GM12878 (cell line): ENCODE measurements at regions of chr11 and their contacts with region 1.

Region 1: DNA sequence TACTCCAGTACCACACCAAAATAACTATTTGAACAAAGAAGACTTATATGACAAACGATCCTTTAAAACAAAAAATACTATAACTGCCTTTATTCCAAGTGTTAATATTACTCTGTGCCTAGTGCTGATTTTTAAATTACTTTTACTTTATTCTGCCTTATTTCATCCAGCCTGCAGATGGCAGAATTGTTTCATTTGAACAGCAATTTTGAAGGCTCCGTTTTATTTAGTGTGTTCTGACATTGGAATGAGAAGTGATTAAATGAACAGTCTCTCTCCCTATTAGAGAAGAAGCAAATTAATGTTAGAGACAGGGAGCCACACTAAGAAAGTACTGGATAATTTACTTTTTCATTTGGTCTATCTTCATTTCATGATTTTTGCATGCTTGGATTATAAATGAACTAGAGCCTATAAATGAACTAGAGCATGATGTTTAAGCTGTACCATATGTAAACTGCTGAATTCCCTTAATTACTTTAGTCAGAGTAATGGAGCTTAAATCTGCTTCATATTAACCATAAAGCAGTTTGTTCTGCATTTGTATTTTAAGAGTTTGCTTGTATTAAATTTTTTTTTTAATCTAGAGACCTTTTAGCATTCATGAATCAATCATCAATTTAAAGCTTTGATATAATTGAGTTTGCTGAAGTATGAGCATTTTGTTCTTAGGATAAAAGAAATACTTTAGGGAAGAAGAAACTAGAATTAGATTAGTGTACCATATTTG is 9.8 kb downstream of the PDHX start:
- DNase-seq: no peak
- ATAC-seq: peak; percentile 76
- H3K4me3 ChIP-seq: no peak overlapping the region
- H3K27ac ChIP-seq: no peak overlapping the region
- H3K4me1 ChIP-seq: 0 out of 2 replicates have a peak, but pooled peaks cover 2% of the 10 kb centered on the region
- H3K27me3 ChIP-seq: no peaks in the 10 kb centered on the region
- CTCF ChIP-seq: peak; percentile 52 to 70 (median 59); a peak in 5 of 6 replicates
- EP300 ChIP-seq: no peak
- POLR2A ChIP-seq: no peak
- RAD21 ChIP-seq: peak; percentile 97

Region 2: GRCh38 chr11:34585735-34586487 is 340.4 kb before region 1 on chr11:
- CTCF ChIA-PET with region 1: interaction called, 3 read pairs
- POLR2A ChIA-PET with region 1: no interaction called
- RAD21 ChIA-PET with region 1: interaction called, 4 read pairs
- SMC1A ChIA-PET with region 1: interaction called, 10 read pairs
- in situ Hi-C with region 1: no loop called
- intact Hi-C with region 1: no loop called
- DNase-seq: peak; percentile 20
- ATAC-seq: peak; percentile 91
- H3K4me3 ChIP-seq: no peak overlapping the region
- H3K27ac ChIP-seq: no peak overlapping the region
- H3K4me1 ChIP-seq: no peaks in the 10 kb centered on the region
- H3K27me3 ChIP-seq: no peaks in the 10 kb centered on the region; a peak in 2 of 4 replicates
- CTCF ChIP-seq: peak; percentile 54 to 64 (median 59); a peak in 5 of 6 replicates
- EP300 ChIP-seq: no peak
- POLR2A ChIP-seq: no peak
- RAD21 ChIP-seq: peak; percentile 91

Region 3: DNA sequence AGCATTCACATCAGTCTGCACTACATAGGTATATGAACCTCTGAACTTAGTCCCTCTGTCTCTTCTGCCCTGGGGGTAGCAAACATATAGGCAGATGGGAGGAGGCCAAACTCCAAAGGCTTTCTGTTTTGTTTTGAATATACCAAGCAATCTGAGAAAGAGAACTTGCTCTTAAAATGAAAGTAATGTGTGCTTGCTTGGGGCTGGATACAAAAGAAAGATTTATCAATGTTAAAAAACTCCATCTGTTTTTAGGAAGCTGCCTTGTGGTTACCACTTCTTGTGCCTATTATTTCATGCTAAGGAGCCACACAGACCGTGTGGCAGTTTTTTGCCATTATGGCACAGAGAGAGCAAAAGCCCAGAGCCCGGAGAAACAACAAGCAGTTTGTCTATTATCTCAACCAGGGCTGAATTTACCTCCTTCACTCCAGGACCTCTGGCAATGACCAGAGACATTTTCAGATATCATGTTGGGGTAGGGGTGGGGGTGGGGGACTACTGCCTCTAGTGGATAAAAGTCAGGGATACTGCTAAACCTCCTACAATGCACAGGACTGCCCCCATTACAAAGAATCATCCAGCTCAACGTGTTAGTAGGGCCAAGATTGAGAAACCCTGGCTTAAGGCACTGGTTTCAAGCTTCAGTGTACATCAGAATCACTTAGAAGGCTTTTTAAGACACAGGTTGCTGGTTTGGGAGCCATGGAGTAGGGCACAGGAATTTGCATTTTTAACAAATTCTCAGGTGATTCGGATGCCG is 134.3 kb before region 1 on chr11:
- CTCF ChIA-PET with region 1: no interaction called
- POLR2A ChIA-PET with region 1: no interaction called
- RAD21 ChIA-PET with region 1: no interaction called
- SMC1A ChIA-PET with region 1: no interaction called
- in situ Hi-C with region 1: no loop called
- intact Hi-C with region 1: no loop called
- DNase-seq: no peak
- ATAC-seq: no peak
- H3K4me3 ChIP-seq: no peak overlapping the region
- H3K27ac ChIP-seq: no peak overlapping the region
- H3K4me1 ChIP-seq: no peaks in the 10 kb centered on the region
- H3K27me3 ChIP-seq: no peaks in the 10 kb centered on the region
- CTCF ChIP-seq: no peak
- EP300 ChIP-seq: no peak
- POLR2A ChIP-seq: no peak
- RAD21 ChIP-seq: no peak

Region 4: DNA sequence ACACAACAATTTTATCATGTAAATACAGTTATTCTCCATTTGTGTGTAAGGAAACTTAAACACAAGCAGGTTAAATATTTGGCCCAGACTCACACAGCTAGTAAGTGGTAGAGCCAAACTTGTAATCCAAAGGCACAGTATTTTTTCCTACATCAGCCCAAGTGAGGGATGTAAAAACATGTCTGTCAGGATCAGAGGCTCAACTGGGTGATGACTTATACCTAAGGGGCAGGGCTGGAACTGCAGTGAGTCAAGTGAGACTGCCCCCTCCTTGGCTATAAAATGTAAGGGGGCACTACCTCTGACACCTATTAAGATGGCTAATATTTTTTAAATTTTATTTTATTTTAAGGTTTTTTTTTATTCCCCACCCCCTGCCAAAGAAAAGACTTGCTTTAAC is 92.7 kb before region 1 on chr11:
- CTCF ChIA-PET with region 1: no interaction called
- POLR2A ChIA-PET with region 1: no interaction called
- RAD21 ChIA-PET with region 1: no interaction called
- SMC1A ChIA-PET with region 1: no interaction called
- in situ Hi-C with region 1: no loop called
- intact Hi-C with region 1: no loop called
- DNase-seq: no peak
- ATAC-seq: no peak
- H3K4me3 ChIP-seq: no peak overlapping the region
- H3K27ac ChIP-seq: no peak overlapping the region
- H3K4me1 ChIP-seq: no peaks in the 10 kb centered on the region
- H3K27me3 ChIP-seq: peaks cover 0 to 1% of the 10 kb centered on the region in 2 experiments; a peak in 2 of 4 replicates
- CTCF ChIP-seq: no peak
- EP300 ChIP-seq: no peak
- POLR2A ChIP-seq: no peak
- RAD21 ChIP-seq: no peak

Region 5: DNA sequence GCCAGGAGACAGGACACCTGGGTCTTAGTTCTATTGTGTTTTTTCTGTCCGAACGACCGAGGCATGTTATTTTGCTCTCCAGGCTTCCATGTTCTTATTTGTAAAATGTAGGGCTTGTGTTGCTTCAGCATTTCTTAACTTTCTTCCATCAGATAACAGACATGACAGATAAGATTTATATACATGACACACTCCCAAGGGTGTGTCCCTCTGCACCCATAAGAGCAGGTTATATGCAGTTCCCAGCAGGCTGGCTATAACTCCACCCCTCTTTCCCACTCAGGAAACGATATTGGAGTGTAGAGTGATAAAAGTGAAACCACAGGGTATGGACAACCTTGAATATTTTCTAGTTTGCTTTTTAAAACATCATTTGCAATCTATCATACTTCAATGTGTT is 75.9 kb before region 1 on chr11:
- CTCF ChIA-PET with region 1: no interaction called
- POLR2A ChIA-PET with region 1: no interaction called
- RAD21 ChIA-PET with region 1: no interaction called
- SMC1A ChIA-PET with region 1: no interaction called
- in situ Hi-C with region 1: no loop called
- intact Hi-C with region 1: no loop called
- DNase-seq: no peak
- ATAC-seq: no peak
- H3K4me3 ChIP-seq: no peak overlapping the region
- H3K27ac ChIP-seq: no peak overlapping the region
- H3K4me1 ChIP-seq: no peaks in the 10 kb centered on the region
- H3K27me3 ChIP-seq: no peaks in the 10 kb centered on the region
- CTCF ChIP-seq: no peak
- EP300 ChIP-seq: no peak
- POLR2A ChIP-seq: no peak
- RAD21 ChIP-seq: no peak

Region 6: DNA sequence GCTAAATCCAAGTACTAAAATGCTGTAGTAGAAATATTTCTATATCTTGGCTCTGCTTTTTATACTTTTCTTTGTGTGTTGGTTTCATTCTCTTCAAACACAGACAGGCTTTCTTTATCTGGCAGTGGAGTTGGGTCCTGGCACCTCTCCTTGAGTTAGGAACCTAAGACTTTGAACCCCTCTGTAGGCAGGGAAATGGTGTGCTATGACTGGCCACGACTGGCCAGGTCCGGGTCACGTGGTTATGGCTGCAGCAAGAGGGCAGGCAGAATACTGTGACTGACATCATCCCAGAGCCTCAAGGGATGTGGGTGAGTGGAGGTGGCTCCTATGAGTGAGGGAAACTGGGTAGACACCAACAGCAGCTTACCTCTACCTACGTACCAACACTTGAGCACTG is 52.1 kb before region 1 on chr11:
- CTCF ChIA-PET with region 1: no interaction called
- POLR2A ChIA-PET with region 1: no interaction called
- RAD21 ChIA-PET with region 1: no interaction called
- SMC1A ChIA-PET with region 1: no interaction called
- in situ Hi-C with region 1: no loop called
- intact Hi-C with region 1: no loop called
- DNase-seq: no peak
- ATAC-seq: no peak
- H3K4me3 ChIP-seq: no peak overlapping the region
- H3K27ac ChIP-seq: no peak overlapping the region
- H3K4me1 ChIP-seq: no peaks in the 10 kb centered on the region
- H3K27me3 ChIP-seq: no peaks in the 10 kb centered on the region
- CTCF ChIP-seq: no peak
- EP300 ChIP-seq: no peak
- POLR2A ChIP-seq: no peak
- RAD21 ChIP-seq: no peak

Region 7: DNA sequence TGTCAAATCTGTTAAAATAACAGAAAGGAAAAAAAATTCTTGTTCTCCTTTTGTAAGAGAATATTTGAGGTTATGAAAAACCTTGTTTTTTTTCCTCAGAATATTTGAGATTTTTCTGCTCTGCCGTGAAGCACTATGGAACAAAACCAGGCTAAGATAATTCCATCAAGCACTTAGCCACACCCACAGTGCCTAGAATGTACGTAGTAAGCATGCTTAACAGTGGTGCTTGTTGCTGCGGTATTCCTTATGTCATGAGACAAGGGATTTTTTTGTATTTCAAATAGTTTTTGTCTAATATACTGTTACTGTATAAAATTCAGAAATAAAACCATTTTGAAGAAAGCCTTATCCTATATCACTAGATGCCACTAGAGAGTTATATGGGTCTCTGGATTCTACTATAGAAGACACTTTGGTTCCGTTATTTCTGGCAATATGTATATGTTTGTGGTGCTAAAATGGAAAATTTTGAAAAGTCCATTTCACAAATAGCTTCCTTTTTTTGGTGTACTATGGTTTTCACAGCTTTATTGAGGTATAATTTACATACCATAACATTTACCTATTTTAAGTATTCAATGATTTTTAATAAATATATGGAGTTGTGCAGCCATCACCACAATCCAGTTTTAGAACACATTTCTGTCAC is 13.9 kb after region 1 on chr11:
- CTCF ChIA-PET with region 1: interaction called, 16 read pairs
- POLR2A ChIA-PET with region 1: no interaction called
- RAD21 ChIA-PET with region 1: interaction called, 3 read pairs
- SMC1A ChIA-PET with region 1: interaction called, 11 read pairs
- in situ Hi-C with region 1: no loop called
- intact Hi-C with region 1: no loop called
- DNase-seq: no peak
- ATAC-seq: peak; percentile 61
- H3K4me3 ChIP-seq: no peak overlapping the region
- H3K27ac ChIP-seq: no peak overlapping the region
- H3K4me1 ChIP-seq: no peaks in the 10 kb centered on the region; the same call in 1 of the 2 replicates
- H3K27me3 ChIP-seq: no peaks in the 10 kb centered on the region
- CTCF ChIP-seq: peak in 2 of 3 experiments; percentile 8 to 27; a peak in 1 of 6 replicates
- EP300 ChIP-seq: no peak
- POLR2A ChIP-seq: no peak
- RAD21 ChIP-seq: peak; percentile 46

Region 8: GRCh38 chr11:34997952-34998528 is 71.8 kb after region 1 on chr11:
- CTCF ChIA-PET with region 1: interaction called, 13 read pairs
- POLR2A ChIA-PET with region 1: no interaction called
- RAD21 ChIA-PET with region 1: interaction called, 9 read pairs
- SMC1A ChIA-PET with region 1: interaction called, 7 read pairs
- in situ Hi-C with region 1: no loop called
- intact Hi-C with region 1: no loop called
- DNase-seq: no peak
- ATAC-seq: peak; percentile 74
- H3K4me3 ChIP-seq: no peak overlapping the region
- H3K27ac ChIP-seq: no peak overlapping the region
- H3K4me1 ChIP-seq: peaks cover 8% of the 10 kb centered on the region; the same call in 1 of the 2 replicates
- H3K27me3 ChIP-seq: no peaks in the 10 kb centered on the region
- CTCF ChIP-seq: peak; percentile 24 to 62 (median 41); a peak in 5 of 6 replicates
- EP300 ChIP-seq: no peak
- POLR2A ChIP-seq: no peak
- RAD21 ChIP-seq: peak; percentile 62

Region 9: DNA sequence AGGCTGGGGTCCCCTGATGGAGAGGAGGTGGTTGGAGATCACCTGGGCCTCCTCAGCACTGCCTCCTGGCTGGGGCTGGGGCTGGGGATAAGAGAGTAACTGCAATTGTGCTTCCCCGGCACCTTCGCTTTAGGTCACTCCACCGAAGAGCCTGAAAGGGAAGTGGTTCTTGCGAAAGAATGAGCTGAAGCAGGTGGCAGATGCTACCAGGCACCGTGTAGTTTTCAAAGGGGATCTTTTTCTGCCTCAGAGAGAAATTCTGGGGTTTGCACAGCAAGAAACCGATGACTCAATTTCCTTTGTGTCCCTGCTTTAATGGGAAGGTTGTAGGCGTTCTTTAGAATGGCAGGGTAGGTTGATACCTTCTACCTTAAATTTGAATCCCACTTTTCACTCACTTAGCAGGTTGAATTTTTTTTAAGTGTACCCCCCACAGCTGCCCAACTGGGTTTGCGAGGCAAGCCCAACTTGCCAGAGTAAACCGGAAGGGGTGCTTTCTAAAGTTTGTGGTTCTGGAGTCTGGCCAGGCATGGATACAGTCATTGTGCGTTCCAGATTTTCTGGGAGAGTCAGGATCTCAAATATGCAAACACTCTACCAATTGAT is 218.0 kb after region 1 on chr11:
- CTCF ChIA-PET with region 1: interaction called, 5 read pairs
- POLR2A ChIA-PET with region 1: no interaction called
- RAD21 ChIA-PET with region 1: interaction called, 6 read pairs
- SMC1A ChIA-PET with region 1: interaction called, 17 read pairs
- in situ Hi-C with region 1: no loop called
- intact Hi-C with region 1: loop called (anchors 5 kb)
- DNase-seq: peak; percentile 85
- ATAC-seq: peak; percentile 67
- H3K4me3 ChIP-seq: peak overlapping the region; percentile 56
- H3K27ac ChIP-seq: peak overlapping the region; percentile 54
- H3K4me1 ChIP-seq: peaks cover 55% of the 10 kb centered on the region
- H3K27me3 ChIP-seq: no peaks in the 10 kb centered on the region
- CTCF ChIP-seq: peak in 2 of 3 experiments; percentile 18 to 22; a peak in 2 of 6 replicates
- EP300 ChIP-seq: peak; percentile 64 to 77; a peak in 3 of 4 replicates
- POLR2A ChIP-seq: 0 out of 2 replicates have a peak, but pooled peaks have one; percentile 52
- RAD21 ChIP-seq: peak; percentile 41; the same call in 1 of the 2 replicates

Region 10: GRCh38 chr11:35237860-35238715 is 311.8 kb after region 1 on chr11:
- CTCF ChIA-PET with region 1: interaction called, 12 read pairs
- POLR2A ChIA-PET with region 1: interaction called, 4 read pairs
- RAD21 ChIA-PET with region 1: interaction called, 17 read pairs
- SMC1A ChIA-PET with region 1: interaction called, 14 read pairs
- in situ Hi-C with region 1: loop called (anchors 5 kb)
- intact Hi-C with region 1: loop called (anchors 1 kb)
- DNase-seq: peak; percentile 35
- ATAC-seq: peak; percentile 70
- H3K4me3 ChIP-seq: no peak overlapping the region
- H3K27ac ChIP-seq: no peak overlapping the region
- H3K4me1 ChIP-seq: peaks cover 19% of the 10 kb centered on the region
- H3K27me3 ChIP-seq: no peaks in the 10 kb centered on the region
- CTCF ChIP-seq: peak; percentile 73 to 82 (median 82)
- EP300 ChIP-seq: no peak
- POLR2A ChIP-seq: no peak
- RAD21 ChIP-seq: peak; percentile 84

Region 11: GRCh38 chr11:35305670-35306382 is 379.6 kb after region 1 on chr11:
- CTCF ChIA-PET with region 1: interaction called, 35 read pairs
- POLR2A ChIA-PET with region 1: no interaction called
- RAD21 ChIA-PET with region 1: interaction called, 24 read pairs
- SMC1A ChIA-PET with region 1: interaction called, 50 read pairs
- in situ Hi-C with region 1: no loop called
- intact Hi-C with region 1: loop called (anchors 1 kb)
- DNase-seq: no peak
- ATAC-seq: peak; percentile 90
- H3K4me3 ChIP-seq: no peak overlapping the region
- H3K27ac ChIP-seq: no peak overlapping the region
- H3K4me1 ChIP-seq: peaks cover 19% of the 10 kb centered on the region
- H3K27me3 ChIP-seq: no peaks in the 10 kb centered on the region
- CTCF ChIP-seq: peak; percentile 68 to 76 (median 71)
- EP300 ChIP-seq: 0 out of 4 replicates have a peak, but pooled peaks of 1 of the 2 experiments have one; percentile 27
- POLR2A ChIP-seq: no peak
- RAD21 ChIP-seq: peak; percentile 93